Panc1 (cell line): ENCODE measurements at regions of chr2 and their contacts with region 1.

Region 1: GRCh38 chr2:241877989-241878970 is 8.8 kb downstream of the RTP5 start:
- DNase-seq: no peak
- ATAC-seq: peak; percentile 64
- H3K4me3 ChIP-seq: no peak overlapping the region
- H3K27ac ChIP-seq: no peak overlapping the region
- H3K4me1 ChIP-seq: peaks cover 16% of the 10 kb centered on the region
- H3K27me3 ChIP-seq: no peaks in the 10 kb centered on the region
- CTCF ChIP-seq: peak; percentile 88

Region 2: DNA sequence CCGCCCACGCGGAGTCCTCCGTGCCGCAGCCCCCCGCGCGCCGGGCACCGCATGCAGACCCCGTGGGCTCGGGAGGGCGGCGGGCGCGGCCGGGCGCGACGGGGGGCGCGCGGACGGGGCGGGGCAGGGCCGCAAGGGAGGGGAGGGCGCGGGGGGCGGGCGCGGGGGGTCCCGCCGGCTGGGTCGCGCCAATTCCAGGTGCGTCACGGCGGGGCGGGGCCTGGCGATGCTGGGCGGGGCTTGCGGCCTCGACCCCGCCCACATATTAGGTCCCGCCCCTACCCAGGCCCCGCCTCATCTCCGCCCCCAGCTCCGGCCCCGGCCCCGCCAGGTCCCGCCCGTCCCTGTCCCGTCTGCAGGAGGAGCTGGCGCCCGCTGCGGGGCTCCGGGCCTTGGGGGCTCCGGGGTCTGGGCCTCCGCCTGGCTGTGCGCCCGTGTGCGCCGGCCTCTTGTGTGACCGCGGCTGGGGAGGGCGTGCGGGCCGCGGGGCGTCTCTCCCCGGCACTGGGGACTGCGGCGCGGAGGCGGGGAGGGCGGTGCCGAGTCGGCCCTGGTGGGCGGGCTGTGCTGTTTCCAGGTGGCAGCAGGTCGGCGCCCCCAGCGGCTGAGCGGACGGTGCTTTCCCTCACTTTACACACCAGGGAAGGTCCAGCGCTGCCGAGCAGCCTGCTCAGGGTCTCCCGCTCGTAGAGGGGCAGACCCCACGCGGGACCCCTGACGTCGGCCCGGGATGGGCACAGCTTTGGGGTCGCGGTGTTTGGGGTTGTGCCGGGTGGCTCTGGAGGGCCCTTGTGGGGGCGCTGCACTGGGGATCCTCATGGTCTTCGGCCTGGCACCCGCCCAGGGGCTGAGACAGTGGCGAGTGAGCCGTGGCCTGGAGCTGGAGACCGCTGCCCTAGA is 175.9 kb before region 1 on chr2:
- CTCF ChIA-PET with region 1: no interaction called
- POLR2A ChIA-PET with region 1: interaction called, 17 read pairs
- in situ Hi-C with region 1: no loop called
- intact Hi-C with region 1: no loop called
- DNase-seq: no peak
- ATAC-seq: peak; percentile 86
- H3K4me3 ChIP-seq: peak overlapping the region; percentile 71 to 77
- H3K27ac ChIP-seq: peak overlapping the region; percentile 71
- H3K4me1 ChIP-seq: peaks cover 10% of the 10 kb centered on the region
- H3K27me3 ChIP-seq: no peaks in the 10 kb centered on the region
- CTCF ChIP-seq: no peak; the same call in 1 of the 2 replicates

Region 3: DNA sequence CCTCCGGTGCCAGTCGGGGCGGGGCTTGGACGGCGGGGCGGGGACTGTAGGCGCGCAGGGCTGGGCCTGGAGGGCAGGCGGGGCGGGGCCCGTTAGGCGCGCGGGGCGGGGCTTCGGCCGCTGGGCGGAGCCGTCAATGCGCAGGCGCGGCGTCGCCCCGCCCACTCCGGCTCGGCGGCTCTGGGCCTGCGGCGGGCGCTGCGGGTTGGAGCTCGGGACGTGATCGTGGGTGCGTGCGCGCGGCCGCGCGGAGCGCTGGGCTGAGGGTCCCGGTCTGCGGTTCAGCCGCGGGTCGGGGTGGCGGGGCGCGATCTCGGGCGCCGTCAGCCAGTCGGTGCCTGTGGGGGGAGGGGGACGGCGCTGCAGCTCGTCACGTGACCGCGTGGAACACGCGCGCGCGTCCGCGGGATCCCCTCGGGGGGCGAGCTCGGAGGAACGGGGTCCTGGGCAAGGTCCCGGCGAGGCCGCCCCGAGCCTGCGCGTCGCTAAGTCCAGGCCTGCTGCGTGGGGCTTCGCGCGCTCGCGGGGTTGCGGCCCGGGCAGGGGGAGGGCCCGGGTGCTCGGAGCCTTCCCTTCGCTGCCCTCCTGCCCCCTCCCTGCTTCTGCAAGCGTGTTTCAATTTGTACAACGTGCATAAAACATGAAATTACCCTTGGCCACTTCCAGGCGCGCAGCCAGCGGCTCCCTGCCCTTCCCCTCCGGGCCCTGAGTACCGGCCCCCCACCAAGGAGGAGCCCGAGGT is 143.6 kb before region 1 on chr2 and contains the start of gene D2HGDH:
- CTCF ChIA-PET with region 1: interaction called, 4 read pairs
- POLR2A ChIA-PET with region 1: no interaction called
- in situ Hi-C with region 1: no loop called
- intact Hi-C with region 1: loop called (anchors 10 kb)
- DNase-seq: no peak
- ATAC-seq: peak; percentile 92
- H3K4me3 ChIP-seq: peak within 1 kb of the TSS; percentile 75 to 83
- H3K27ac ChIP-seq: peak within 1 kb of the TSS; percentile 83
- H3K4me1 ChIP-seq: peaks cover 4% of the 10 kb centered on the region; the same call in 1 of the 2 replicates
- H3K27me3 ChIP-seq: no peaks in the 10 kb centered on the region
- CTCF ChIP-seq: no peak
- total RNA-seq, gene D2HGDH: 53.0 TPM

Region 4: DNA sequence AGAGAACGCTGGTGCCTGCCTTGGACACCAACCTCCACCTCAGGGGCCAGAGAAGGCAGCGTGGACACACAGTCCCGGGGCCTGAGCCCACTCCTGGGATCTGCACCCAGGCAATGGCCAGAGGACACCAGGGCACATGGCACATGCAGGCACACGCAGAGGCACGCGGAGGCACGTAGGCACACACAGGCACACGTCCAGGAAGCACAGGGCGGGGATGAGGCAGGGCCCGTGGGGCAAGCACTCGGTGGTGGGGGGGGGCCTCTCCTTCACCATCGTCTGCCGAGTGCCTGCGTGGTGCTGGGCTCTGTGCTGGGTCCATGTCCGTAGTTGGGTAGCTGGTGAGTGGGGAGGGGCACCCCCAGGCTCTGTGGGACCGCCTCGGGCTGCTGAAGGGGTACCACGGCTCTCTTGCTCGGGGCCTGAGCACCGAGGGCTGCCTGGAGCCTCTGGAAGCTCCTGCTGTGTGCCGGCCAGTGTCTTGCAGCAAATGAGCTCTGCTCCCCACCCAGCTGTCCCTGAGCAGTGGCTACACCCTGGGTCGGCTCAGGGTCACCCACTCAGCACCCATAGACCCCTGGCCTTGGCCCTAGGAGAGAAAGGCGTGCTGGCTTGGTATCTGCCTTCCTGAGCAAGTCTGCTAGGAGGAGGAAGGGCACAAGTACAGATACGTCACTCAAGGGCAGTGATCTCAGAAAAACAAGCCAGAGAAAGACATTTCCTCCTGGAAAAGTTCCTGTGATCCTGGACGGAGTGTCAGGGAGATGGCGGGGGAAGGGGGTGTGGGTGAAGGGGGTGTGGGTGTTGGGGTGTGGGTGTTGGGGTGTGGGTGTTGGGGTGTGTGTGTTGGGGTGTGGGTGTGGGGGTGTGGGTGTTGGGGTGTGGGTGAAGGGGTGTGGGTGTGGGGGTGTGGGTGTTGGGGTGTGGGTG is 17.7 kb after region 1 on chr2:
- CTCF ChIA-PET with region 1: no interaction called
- POLR2A ChIA-PET with region 1: no interaction called
- in situ Hi-C with region 1: no loop called
- intact Hi-C with region 1: no loop called
- DNase-seq: no peak
- ATAC-seq: peak; percentile 73
- H3K4me3 ChIP-seq: no peak overlapping the region
- H3K27ac ChIP-seq: peak overlapping the region; percentile 76
- H3K4me1 ChIP-seq: peaks cover 38% of the 10 kb centered on the region
- H3K27me3 ChIP-seq: no peaks in the 10 kb centered on the region
- CTCF ChIP-seq: no peak